ENCODE measurements at regions of chr11 and their contacts with region 1.

Region 1: GRCh38 chr11:114280696-114281095 is 15.5 kb upstream of the NNMT start:
- H3K4me3 ChIP-seq: no peak overlapping the region
- H3K27ac ChIP-seq: no peak overlapping the region
- H3K4me1 ChIP-seq: no peaks in the 10 kb centered on the region
- CTCF ChIP-seq: peak; percentile 69; the same call in 1 of the 2 replicates

Region 2: GRCh38 chr11:114291842-114292680 is 11.4 kb after region 1 on chr11:
- CTCF ChIA-PET with region 1: interaction called, 10 read pairs
- POLR2A ChIA-PET with region 1: no interaction called
- H3K4me3 ChIP-seq: no peak overlapping the region
- H3K27ac ChIP-seq: no peak overlapping the region
- H3K4me1 ChIP-seq: no peaks in the 10 kb centered on the region
- CTCF ChIP-seq: no peak

Region 3: DNA sequence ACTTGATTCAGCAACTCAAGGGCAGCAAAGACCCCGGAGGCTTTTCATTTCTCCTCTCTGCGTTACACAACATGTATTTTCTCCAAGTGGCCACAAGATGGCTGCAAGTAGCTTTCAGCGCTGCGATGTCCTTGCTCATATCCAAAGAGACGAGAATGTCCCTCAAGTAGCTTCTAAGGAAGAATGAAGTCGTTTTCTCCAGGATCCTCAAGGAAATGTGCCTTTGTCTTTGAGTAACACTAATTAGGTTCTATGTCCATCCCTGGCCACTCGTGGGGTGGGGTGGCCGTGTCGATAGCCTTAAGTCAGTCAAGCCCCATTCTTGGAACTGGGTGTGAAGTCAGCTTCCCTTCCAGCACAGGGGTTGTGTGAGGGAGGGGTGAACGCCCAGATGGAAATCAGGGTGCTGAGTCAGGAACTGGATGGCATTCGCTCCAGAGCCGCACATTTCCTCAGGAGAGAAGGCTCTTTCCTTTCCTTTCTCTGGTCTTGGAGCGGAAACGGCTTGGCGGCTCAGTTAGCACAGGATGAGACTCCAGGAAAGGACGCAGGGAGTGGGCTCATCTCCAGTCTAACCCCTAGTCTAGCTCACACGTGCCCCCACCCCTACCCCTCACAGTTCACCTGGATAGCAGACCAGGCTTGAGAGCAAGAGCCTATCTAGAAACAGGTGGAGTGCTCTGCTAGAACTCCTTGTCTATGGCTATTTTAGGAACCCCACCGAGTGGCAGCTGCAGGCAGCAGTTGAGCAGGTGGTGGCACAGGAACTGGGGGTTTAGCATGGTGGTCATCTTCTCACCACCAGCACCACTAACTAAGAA is 59.8 kb after region 1 on chr11:
- CTCF ChIA-PET with region 1: interaction called, 12 read pairs
- POLR2A ChIA-PET with region 1: no interaction called
- H3K4me3 ChIP-seq: no peak overlapping the region
- H3K27ac ChIP-seq: no peak overlapping the region
- H3K4me1 ChIP-seq: no peaks in the 10 kb centered on the region
- CTCF ChIP-seq: peak; percentile 50; the same call in 1 of the 2 replicates